CD4-positive, alpha-beta memory T cell (primary cell): ENCODE measurements at regions of chr16 and their contacts with region 1.

Region 1: DNA sequence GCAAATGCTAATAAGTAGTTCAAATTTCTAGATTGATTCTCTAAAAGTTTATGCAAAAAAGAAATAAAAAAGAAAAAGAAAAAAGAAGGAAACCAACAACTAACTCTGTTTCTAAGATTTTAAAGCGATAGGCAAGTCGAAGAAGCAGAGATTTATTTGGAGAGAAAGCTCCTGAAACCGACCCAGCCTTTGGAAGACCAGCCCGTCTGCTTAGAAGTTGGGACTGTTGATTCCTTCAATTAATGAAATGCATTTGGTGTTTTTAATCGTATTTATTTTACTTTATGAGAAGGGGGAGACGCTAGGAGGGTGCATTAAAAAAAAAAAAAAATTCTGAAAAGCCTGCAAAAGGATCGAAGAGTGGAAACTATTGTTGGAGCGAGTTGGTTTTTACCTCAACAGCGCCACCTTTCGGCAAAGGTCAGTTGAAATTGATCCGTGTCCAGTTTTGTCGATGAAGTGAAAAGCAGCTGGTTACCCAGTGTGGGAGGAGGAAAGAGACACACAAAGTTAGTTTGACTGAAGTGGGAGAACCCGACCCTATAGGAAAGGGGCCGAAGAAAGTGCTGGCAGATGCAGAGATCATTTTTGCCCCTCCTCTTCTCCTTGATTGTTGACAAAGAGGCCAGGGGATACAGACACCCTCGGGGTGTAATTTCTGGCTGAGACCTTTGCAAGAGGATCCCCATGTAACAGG is 1.5 kb upstream of the MAF start:
- DNase-seq: peak; percentile 85 to 89 (median 85)
- H3K4me3 ChIP-seq: peak overlapping the region; percentile 57 to 90
- H3K4me3 Mint-ChIP-seq: peak overlapping the region; percentile 95 to 99 (median 98)
- H3K27ac ChIP-seq: peak overlapping the region; percentile 65
- H3K27ac Mint-ChIP-seq: peak overlapping the region; percentile 73 to 99 (median 96)
- H3K4me1 ChIP-seq: peaks cover 27% of the 10 kb centered on the region
- H3K4me1 Mint-ChIP-seq: peaks cover 18 to 54% (median 32%) of the 10 kb centered on the region in 4 donors
- H3K27me3 ChIP-seq: no peaks in the 10 kb centered on the region
- H3K27me3 Mint-ChIP-seq: no peaks in the 10 kb centered on the region

Region 2: GRCh38 chr16:78503602-78504001 is 1098.5 kb before region 1 on chr16:
- CTCF ChIA-PET with region 1: interaction called, 7 read pairs
- POLR2A ChIA-PET with region 1: no interaction called
- intact Hi-C with region 1: loop called (anchors 1 kb)
- DNase-seq: peak; percentile 41 to 54 (median 48)
- H3K4me3 ChIP-seq: no peak overlapping the region
- H3K4me3 Mint-ChIP-seq: no peak overlapping the region
- H3K27ac ChIP-seq: no peak overlapping the region
- H3K27ac Mint-ChIP-seq: no peak overlapping the region
- H3K4me1 ChIP-seq: no peaks in the 10 kb centered on the region
- H3K4me1 Mint-ChIP-seq: no peaks in the 10 kb centered on the region
- H3K27me3 ChIP-seq: no peaks in the 10 kb centered on the region
- H3K27me3 Mint-ChIP-seq: no peaks in the 10 kb centered on the region

Region 3: GRCh38 chr16:78900044-78900811 is 701.9 kb before region 1 on chr16:
- CTCF ChIA-PET with region 1: no interaction called
- POLR2A ChIA-PET with region 1: interaction called, 13 read pairs
- intact Hi-C with region 1: no loop called
- DNase-seq: no peak
- H3K4me3 ChIP-seq: no peak overlapping the region
- H3K4me3 Mint-ChIP-seq: peak overlapping the region in 5 of 8 donors; percentile 11 to 48 (median 43)
- H3K27ac ChIP-seq: no peak overlapping the region
- H3K27ac Mint-ChIP-seq: peak overlapping the region in 5 of 7 donors; percentile 3 to 60 (median 42)
- H3K4me1 ChIP-seq: peaks cover 57% of the 10 kb centered on the region
- H3K4me1 Mint-ChIP-seq: peaks cover 27 to 66% (median 38%) of the 10 kb centered on the region in 4 donors
- H3K27me3 ChIP-seq: no peaks in the 10 kb centered on the region
- H3K27me3 Mint-ChIP-seq: no peaks in the 10 kb centered on the region

Region 4: GRCh38 chr16:79137396-79137939 is 464.6 kb before region 1 on chr16:
- CTCF ChIA-PET with region 1: interaction called, 14 read pairs
- POLR2A ChIA-PET with region 1: no interaction called
- intact Hi-C with region 1: no loop called
- DNase-seq: no peak
- H3K4me3 ChIP-seq: no peak overlapping the region
- H3K4me3 Mint-ChIP-seq: no peak overlapping the region
- H3K27ac ChIP-seq: no peak overlapping the region
- H3K27ac Mint-ChIP-seq: no peak overlapping the region
- H3K4me1 ChIP-seq: no peaks in the 10 kb centered on the region
- H3K4me1 Mint-ChIP-seq: no peaks in the 10 kb centered on the region
- H3K27me3 ChIP-seq: no peaks in the 10 kb centered on the region
- H3K27me3 Mint-ChIP-seq: no peaks in the 10 kb centered on the region

Region 5: GRCh38 chr16:79381552-79382042 is 220.5 kb before region 1 on chr16:
- CTCF ChIA-PET with region 1: no interaction called
- POLR2A ChIA-PET with region 1: interaction called, 23 read pairs
- intact Hi-C with region 1: loop called (anchors 1 kb)
- DNase-seq: peak in 4 of 5 donors; percentile 24 to 39 (median 34)
- H3K4me3 ChIP-seq: peak overlapping the region in 1 of 2 donors; percentile 21
- H3K4me3 Mint-ChIP-seq: peak overlapping the region; percentile 67 to 85 (median 76)
- H3K27ac ChIP-seq: peak overlapping the region; percentile 16
- H3K27ac Mint-ChIP-seq: peak overlapping the region; percentile 71 to 95 (median 93)
- H3K4me1 ChIP-seq: peaks cover 34% of the 10 kb centered on the region
- H3K4me1 Mint-ChIP-seq: peaks cover 27 to 38% (median 33%) of the 10 kb centered on the region in 4 donors
- H3K27me3 ChIP-seq: no peaks in the 10 kb centered on the region
- H3K27me3 Mint-ChIP-seq: no peaks in the 10 kb centered on the region

Region 6: DNA sequence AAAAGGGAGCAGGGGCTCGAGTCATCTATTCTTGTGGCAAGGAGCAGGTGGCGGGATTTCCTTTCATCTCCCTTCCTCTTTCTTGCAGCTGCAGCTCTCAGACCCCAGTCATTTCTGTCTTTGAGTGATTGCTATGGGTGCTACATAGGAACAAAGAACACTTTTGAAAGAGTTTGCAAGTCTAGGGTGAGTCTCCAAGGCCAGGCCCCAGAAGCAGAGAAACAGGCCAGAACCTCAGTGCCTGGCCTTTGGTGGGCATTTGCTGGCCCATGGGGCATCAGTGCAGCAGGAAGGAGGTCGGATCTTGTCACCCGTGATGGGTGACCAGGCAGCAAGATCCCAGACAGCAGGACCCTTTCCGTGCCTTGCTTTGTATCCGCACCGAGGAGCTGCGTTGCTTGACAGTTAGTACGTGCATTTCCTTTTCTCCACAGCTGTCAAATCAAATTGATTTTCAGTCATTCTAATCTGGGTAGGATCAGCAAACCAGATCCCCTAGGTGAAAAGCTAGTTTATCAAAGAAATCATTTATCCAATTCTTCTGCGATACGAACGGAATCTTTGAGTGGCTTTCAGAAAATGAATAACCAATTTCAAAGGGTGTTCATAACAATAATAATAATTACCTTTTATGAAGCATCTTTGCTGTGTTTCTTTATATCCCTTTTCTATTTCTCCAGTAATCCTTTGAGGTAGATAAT is 243.1 kb after region 1 on chr16:
- CTCF ChIA-PET with region 1: no interaction called
- POLR2A ChIA-PET with region 1: no interaction called
- intact Hi-C with region 1: no loop called
- DNase-seq: peak in 1 of 5 donors; percentile 29
- H3K4me3 ChIP-seq: no peak overlapping the region
- H3K4me3 Mint-ChIP-seq: no peak overlapping the region
- H3K27ac ChIP-seq: no peak overlapping the region
- H3K27ac Mint-ChIP-seq: peak overlapping the region in 1 of 7 donors; percentile 52
- H3K4me1 ChIP-seq: no peaks in the 10 kb centered on the region
- H3K4me1 Mint-ChIP-seq: peaks cover 0 to 1% (median 0%) of the 10 kb centered on the region in 4 donors
- H3K27me3 ChIP-seq: no peaks in the 10 kb centered on the region
- H3K27me3 Mint-ChIP-seq: peaks cover 1 to 2% of the 10 kb centered on the region in 2 donors

Region 7: GRCh38 chr16:80084685-80085084 is 482.6 kb after region 1 on chr16:
- CTCF ChIA-PET with region 1: no interaction called
- POLR2A ChIA-PET with region 1: interaction called, 3 read pairs
- intact Hi-C with region 1: loop called (anchors 10 kb)
- DNase-seq: peak in 3 of 5 donors; percentile 9 to 38 (median 16)
- H3K4me3 ChIP-seq: no peak overlapping the region
- H3K4me3 Mint-ChIP-seq: no peak overlapping the region
- H3K27ac ChIP-seq: no peak overlapping the region
- H3K27ac Mint-ChIP-seq: no peak overlapping the region
- H3K4me1 ChIP-seq: no peaks in the 10 kb centered on the region
- H3K4me1 Mint-ChIP-seq: no peaks in the 10 kb centered on the region
- H3K27me3 ChIP-seq: no peaks in the 10 kb centered on the region
- H3K27me3 Mint-ChIP-seq: peaks cover 0 to 1% of the 10 kb centered on the region in 2 donors